ENCODE measurements at regions of chr10 and their contacts with region 1.

Region 1: DNA sequence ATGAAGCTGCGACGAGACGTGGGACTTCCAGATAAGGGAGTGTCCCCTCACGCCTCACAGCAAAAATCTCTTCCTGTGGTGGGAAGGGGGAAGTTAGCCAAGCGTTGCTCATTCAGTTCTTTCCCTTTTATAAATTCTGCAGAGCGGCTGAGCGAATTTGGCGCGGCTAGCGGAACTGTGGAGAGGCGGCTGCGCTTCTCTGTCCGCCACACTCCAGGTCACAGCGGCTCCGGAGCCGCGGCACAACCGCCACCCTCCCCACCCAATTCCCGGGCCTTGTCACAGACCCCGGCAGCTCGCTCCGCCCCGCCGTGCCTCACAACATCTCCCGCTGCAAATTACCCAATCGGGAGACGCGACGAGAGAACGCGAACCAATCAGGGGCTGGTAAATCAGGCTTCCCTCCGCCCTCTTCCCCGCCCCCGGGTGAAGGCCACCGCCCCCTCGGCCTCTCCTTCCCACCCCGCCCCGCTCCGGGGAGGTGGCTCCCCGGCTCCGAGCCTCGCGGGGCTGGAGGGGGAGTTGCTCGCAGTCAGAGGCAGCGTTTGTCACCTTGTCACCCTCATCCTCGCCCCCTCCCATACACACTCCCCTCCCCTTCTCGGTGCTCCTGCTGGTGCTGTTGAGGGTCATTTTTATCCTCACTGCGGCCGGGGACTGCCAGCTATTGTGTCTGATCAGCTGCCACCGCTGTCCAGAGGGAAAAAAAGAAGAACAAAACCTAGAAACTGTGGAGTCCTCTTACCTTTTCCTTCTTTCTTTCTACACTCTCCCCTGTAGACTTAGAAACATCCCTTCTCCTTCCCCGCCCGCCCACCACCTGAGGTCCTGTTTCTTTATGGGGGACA is 918 bp upstream of the ARHGAP21 start:
- DNase-seq: peak; percentile 99
- ATAC-seq: peak; percentile 92

Region 2: GRCh38 chr10:24483489-24484100 is 241.0 kb before region 1 on chr10:
- intact Hi-C with region 1: no loop called
- DNase-seq: no peak
- ATAC-seq: peak; percentile 45

Region 3: DNA sequence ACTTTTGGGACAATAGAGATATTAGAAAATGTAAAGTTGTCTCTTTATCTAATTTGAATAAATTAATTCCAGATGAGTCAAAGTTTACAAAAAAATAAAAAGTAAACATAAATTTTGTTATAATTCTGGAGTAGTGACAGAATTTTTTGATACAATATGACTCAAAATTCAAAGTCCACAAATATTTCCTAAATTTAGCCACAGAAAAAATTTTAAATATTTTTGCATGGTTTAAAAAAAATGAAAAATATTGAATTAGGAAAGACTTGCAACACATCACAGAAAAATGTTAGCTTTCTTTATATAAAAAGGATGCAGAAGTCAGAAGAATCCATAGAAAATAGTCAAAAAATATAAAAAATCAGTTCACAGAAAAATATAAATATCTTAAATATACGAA is 118.6 kb before region 1 on chr10:
- intact Hi-C with region 1: no loop called
- DNase-seq: no peak
- ATAC-seq: no peak

Region 4: GRCh38 chr10:24642622-24643417 is 81.8 kb before region 1 on chr10:
- intact Hi-C with region 1: loop called (anchors 5 kb)
- DNase-seq: no peak
- ATAC-seq: peak; percentile 92

Region 5: DNA sequence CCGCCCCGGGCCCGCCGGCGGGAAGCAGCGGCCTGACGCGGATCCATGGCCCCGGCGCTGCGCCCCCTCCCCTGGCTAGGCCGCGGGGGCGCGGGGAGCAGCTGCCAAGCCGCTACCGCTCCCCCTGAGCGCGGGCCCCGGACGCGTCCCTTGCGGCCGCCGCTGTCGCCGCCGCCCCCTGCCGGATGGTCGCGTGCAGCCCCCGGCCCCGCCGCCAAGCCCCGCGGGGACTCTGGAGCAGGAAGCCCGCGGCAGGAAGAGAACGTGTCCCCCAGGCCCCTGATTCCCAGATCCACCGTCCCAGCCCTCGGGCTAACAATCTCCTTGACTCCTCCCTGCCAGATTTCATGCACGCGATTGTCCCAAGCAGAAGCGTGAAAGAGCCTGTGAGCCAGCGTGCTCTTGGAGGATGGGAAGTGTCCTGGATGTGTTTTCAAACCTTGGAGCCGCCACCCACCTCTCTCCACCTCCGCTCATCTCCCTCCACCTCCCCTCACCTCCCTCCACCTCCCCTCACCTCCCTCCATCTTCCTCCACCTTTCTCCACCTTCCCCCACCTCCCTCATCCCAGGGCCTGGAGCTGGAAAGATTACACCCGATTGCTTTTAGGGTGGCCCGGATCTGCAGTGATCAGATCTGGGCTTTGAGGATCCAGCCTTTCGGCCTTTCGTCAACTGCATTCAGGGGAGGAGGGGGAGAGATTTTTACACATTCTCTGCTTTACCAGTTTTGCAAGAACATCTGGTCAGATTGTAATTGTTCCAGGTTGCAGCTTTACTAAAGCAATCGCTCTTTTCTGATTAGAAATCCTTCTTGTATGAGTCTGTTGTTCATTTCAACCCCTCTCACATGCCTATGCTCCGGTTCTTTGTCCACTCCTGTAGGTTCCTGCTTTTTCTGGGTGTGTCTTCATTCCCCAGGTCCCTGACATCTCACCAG is 228.4 kb after region 1 on chr10:
- intact Hi-C with region 1: loop called (anchors 10 kb)
- DNase-seq: peak; percentile 63
- ATAC-seq: peak; percentile 78

Region 6: GRCh38 chr10:24989867-24990266 is 265.3 kb after region 1 on chr10:
- intact Hi-C with region 1: loop called (anchors 10 kb)
- DNase-seq: no peak
- ATAC-seq: no peak

Region 7: GRCh38 chr10:25016376-25017154 is 292.0 kb after region 1 on chr10 and contains the start of gene THNSL1:
- intact Hi-C with region 1: loop called (anchors 5 kb)
- DNase-seq: peak; percentile 99
- ATAC-seq: peak; percentile 99
- total RNA-seq, gene THNSL1: 6.8 TPM

Region 8: GRCh38 chr10:25080880-25081581 is 356.4 kb after region 1 on chr10:
- intact Hi-C with region 1: loop called (anchors 10 kb)
- DNase-seq: peak; percentile 75
- ATAC-seq: peak; percentile 96

Measured in Right ventricle myocardium superior (tissue), 1 donor.